Heart left ventricle (tissue), 16 donors: ENCODE measurements at regions of chr16 and their contacts with region 1.

Region 1: GRCh38 chr16:30997000-30997886 is 12.2 kb downstream of the HSD3B7 start:
- DNase-seq: peak; percentile 82 to 92 (median 85)
- ATAC-seq: peak; percentile 80 to 95 (median 94)
- H3K4me3 ChIP-seq: peak overlapping the region; percentile 34 to 65 (median 59)
- H3K27ac ChIP-seq: peak overlapping the region in 11 of 12 donors; percentile 27 to 86 (median 69)
- H3K4me1 ChIP-seq: peaks cover 0 to 26% (median 15%) of the 10 kb centered on the region in 12 donors
- H3K27me3 ChIP-seq: no peaks in the 10 kb centered on the region
- CTCF ChIP-seq: no peak
- POLR2A ChIP-seq: peak in 1 of 2 donors; percentile 56

Region 2: DNA sequence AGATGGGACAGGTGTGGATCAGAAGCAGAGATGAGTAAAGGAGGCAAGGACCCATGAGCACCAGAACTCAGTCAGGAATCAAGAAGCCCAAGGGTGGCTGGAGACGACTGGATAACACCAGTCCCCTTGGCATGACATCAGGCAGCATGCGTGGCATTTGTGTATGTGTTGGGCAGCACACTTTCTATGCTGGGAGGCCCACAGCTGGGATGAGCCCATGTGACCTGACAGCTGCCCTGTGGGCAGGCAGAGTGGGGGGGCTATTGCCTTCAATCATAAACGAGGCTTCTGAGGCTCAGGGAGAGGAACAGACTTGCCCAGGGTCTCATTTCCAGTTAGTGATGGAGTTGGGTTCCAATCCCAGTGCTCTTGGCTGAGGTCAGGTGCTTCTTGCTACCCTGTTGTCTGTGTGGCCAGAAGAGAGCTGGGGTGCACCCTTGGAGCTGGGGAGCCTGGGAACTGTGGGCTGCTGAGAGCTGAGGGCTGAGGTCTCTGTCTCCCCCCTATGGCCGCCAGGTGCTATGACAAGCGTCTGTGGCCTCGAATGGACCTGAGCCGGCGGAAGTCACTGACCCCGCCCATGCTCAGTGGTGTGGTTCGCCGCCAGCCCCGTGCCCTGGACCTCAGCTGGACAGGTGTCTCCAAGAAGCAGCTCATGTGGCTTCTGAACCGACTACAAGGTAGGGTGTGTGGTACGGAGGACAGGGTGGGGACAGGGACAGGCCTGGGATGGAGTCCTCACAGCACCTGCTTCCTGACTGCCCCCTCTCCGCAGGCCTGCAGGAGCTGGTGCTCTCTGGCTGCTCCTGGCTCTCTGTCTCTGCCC is 55.4 kb before region 1 on chr16:
- intact Hi-C with region 1: no loop called
- DNase-seq: peak; percentile 73 to 88 (median 82)
- ATAC-seq: peak; percentile 78 to 93 (median 89)
- H3K4me3 ChIP-seq: no peak overlapping the region
- H3K27ac ChIP-seq: peak overlapping the region in 1 of 12 donors; percentile 5
- H3K4me1 ChIP-seq: peaks cover 0 to 24% (median 7%) of the 10 kb centered on the region in 12 donors
- H3K27me3 ChIP-seq: no peaks in the 10 kb centered on the region
- CTCF ChIP-seq: peak; percentile 76 to 94 (median 86)
- POLR2A ChIP-seq: no peak

Region 3: GRCh38 chr16:31032736-31033708 is 35.8 kb after region 1 on chr16 and contains the start of gene STX4:
- intact Hi-C with region 1: loop called in 5 of 10 experiments (anchors 2 to 5 kb)
- DNase-seq: peak; percentile 98 to 99 (median 98)
- ATAC-seq: peak; percentile 93 to 95 (median 94)
- H3K4me3 ChIP-seq: peak within 1 kb of the TSS; percentile 73 to 100 (median 90)
- H3K27ac ChIP-seq: peak within 1 kb of the TSS; percentile 91 to 99 (median 96)
- H3K4me1 ChIP-seq: peaks cover 4 to 31% (median 18%) of the 10 kb centered on the region in 12 donors
- H3K27me3 ChIP-seq: no peaks in the 10 kb centered on the region
- CTCF ChIP-seq: no peak
- POLR2A ChIP-seq: no peak
- total RNA-seq, gene STX4: 19.5 to 65.8 (median 39.7) TPM

Region 4: GRCh38 chr16:31064882-31065461 is 67.7 kb after region 1 on chr16:
- intact Hi-C with region 1: loop called in 1 of 10 experiments (anchors 10 kb)
- DNase-seq: peak in 4 of 5 donors; percentile 62 to 84 (median 70)
- ATAC-seq: peak; percentile 80 to 93 (median 90)
- H3K4me3 ChIP-seq: peak overlapping the region in 1 of 12 donors; percentile 10
- H3K27ac ChIP-seq: peak overlapping the region in 11 of 12 donors; percentile 6 to 87 (median 74)
- H3K4me1 ChIP-seq: peaks cover 0 to 38% (median 12%) of the 10 kb centered on the region in 12 donors
- H3K27me3 ChIP-seq: no peaks in the 10 kb centered on the region
- CTCF ChIP-seq: no peak
- POLR2A ChIP-seq: no peak